GM13977 (cell line): ENCODE measurements at regions of chr17 and their contacts with region 1.

Region 1: GRCh38 chr17:1323336-1323735 is 43.9 kb downstream of the TRARG1 start:
- DNase-seq: no peak
- CTCF ChIP-seq: no peak

Region 2: DNA sequence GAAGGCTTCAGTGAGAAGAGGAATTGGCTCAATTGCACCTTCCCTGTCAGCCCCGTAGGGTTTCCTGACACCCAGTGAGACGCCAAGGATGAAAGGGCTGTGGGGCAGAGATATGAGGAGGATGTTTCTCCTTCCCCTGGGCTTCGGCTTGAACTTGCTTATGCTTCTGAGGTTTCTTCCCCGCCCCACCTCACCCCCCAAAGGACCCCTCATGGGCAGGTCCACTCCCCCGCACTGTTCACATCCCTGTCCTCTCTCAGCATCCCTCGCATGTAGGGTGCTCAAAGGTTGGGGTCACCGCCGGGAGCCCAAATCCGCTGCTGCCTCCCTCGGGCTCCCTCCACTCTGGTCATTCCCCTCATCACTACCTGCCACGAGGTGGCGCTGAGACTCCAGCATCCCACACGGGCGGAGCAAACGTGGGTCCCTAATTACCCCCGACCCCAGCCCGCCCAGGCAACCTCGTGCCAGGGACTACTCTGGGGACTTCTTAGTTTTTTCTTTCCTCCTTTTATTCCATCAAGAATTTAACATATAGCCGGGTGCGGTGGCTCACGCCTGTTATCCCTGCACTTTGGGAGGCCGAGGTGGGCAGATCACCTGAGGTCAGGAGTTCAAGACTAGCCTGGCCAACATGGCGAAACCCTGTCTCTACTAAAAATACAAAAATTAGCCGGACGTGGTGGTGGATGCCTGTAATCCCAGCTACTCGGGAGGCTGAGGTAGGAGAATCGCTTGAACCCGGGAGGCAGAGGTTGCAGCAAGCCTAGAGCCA is 47.2 kb before region 1 on chr17:
- in situ Hi-C with region 1: loop called (anchors 10 kb)
- DNase-seq: peak; percentile 84
- CTCF ChIP-seq: peak; percentile 91